A673 (cell line): ENCODE measurements at regions of chr6 and their contacts with region 1.

Region 1: GRCh38 chr6:154738551-154738961 is 5.3 kb downstream of the SCAF8 start:
- DNase-seq: peak; percentile 27
- H3K4me3 ChIP-seq: no peak overlapping the region
- H3K27ac ChIP-seq: peak overlapping the region; percentile 4
- H3K4me1 ChIP-seq: peaks cover 14% of the 10 kb centered on the region
- H3K27me3 ChIP-seq: no peaks in the 10 kb centered on the region
- CTCF ChIP-seq: no peak

Region 2: GRCh38 chr6:154791556-154792317 is 53.2 kb after region 1 on chr6:
- CTCF ChIA-PET with region 1: no interaction called
- POLR2A ChIA-PET with region 1: interaction called, 10 read pairs
- intact Hi-C with region 1: no loop called
- DNase-seq: peak; percentile 5
- H3K4me3 ChIP-seq: no peak overlapping the region
- H3K27ac ChIP-seq: peak overlapping the region; percentile 5
- H3K4me1 ChIP-seq: peaks cover 17% of the 10 kb centered on the region
- H3K27me3 ChIP-seq: no peaks in the 10 kb centered on the region
- CTCF ChIP-seq: no peak

Region 3: DNA sequence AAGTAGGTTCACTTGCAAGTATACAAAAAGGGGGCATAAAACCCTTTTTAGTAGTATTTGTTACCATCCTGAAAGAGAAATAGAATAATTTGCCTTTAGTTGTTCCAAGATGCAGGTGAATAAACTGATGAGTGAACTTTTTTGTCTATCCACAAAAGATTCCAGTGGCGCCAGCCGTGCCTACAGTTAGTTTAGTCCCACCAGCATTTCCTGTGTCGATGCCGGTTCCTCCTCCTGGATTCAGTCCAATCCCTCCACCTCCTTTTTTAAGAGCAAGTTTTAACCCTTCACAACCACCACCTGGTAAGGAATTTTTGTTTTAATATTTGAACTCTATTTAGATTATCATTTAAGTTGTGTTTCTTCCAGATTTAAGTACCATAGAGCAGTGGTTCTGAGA is 85.5 kb after region 1 on chr6:
- CTCF ChIA-PET with region 1: no interaction called
- POLR2A ChIA-PET with region 1: interaction called, 12 read pairs
- intact Hi-C with region 1: no loop called
- DNase-seq: peak; percentile 81
- H3K4me3 ChIP-seq: no peak overlapping the region
- H3K27ac ChIP-seq: peak overlapping the region; percentile 3
- H3K4me1 ChIP-seq: peaks cover 31% of the 10 kb centered on the region
- H3K27me3 ChIP-seq: no peaks in the 10 kb centered on the region
- CTCF ChIP-seq: no peak